Activated T-helper 1 cell treated with anti-CD3 and anti-CD28 coated beads, Interleukin-12 subunit alpha, Interleukin-12 subunit beta, Interleukin-2, Interleukin-4 antibody, amounts not matched to agents 30 ng/mL and 10 ng/mL and 1 ng/mL, durations not matched to agents 14 hours and 24 hours and 36 hours (primary cell): ENCODE measurements at regions of chr2 and their contacts with region 1.

Region 1: GRCh38 chr2:130727286-130728018 is 1.4 kb upstream of the GPR148 start:
- DNase-seq: peak; percentile 84
- H3K4me3 Mint-ChIP-seq: peak overlapping the region; percentile 76
- H3K27ac Mint-ChIP-seq: peak overlapping the region; percentile 57
- H3K4me1 Mint-ChIP-seq: peaks cover 12% of the 10 kb centered on the region
- H3K27me3 Mint-ChIP-seq: peaks cover 12% of the 10 kb centered on the region

Region 2: DNA sequence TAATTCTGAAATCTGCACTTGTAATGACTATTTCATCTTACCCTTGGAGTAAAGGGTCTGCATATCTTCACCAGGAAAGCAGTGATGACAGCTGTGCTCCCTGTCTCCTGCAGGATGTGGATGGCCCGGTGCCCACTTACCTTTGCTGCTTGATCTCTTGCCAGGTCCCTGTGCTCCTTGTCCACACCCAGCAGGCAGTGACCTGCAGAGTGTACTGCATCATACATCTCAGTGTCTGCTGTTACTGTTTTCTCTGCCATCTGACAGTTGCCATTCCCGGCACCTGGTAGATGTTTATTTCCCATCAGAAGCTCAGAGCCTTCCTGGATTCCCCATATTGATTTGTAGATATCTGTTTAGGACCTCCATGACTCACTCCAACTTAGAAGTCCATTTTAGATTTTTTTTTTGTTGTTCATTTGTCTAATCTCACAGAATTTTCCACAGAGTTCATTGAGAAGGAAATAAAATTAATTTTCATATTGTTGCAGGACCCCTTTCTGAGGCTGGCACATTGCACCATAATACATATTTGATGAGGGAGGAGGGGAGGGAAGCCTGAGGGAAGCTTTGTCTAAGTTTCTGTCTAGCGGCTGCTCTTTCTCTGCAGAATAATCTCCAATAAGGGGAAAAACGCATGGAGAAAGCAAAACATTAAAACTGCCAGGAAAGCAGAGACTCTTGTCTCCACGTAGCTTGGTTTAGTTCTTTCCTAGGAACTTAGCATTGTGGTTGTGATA is 1445.5 kb before region 1 on chr2:
- intact Hi-C with region 1: no loop called
- DNase-seq: no peak
- H3K4me3 Mint-ChIP-seq: no peak overlapping the region
- H3K27ac Mint-ChIP-seq: no peak overlapping the region
- H3K4me1 Mint-ChIP-seq: no peaks in the 10 kb centered on the region
- H3K27me3 Mint-ChIP-seq: no peaks in the 10 kb centered on the region

Region 3: GRCh38 chr2:130785466-130786055 is 58.1 kb after region 1 on chr2:
- intact Hi-C with region 1: no loop called
- DNase-seq: no peak
- H3K4me3 Mint-ChIP-seq: no peak overlapping the region
- H3K27ac Mint-ChIP-seq: no peak overlapping the region
- H3K4me1 Mint-ChIP-seq: no peaks in the 10 kb centered on the region
- H3K27me3 Mint-ChIP-seq: peaks cover 7% of the 10 kb centered on the region

Region 4: GRCh38 chr2:131093006-131093695 is 365.7 kb after region 1 on chr2 and contains the start of gene FAM168B:
- intact Hi-C with region 1: loop called (anchors 5 kb)
- DNase-seq: peak; percentile 89
- H3K4me3 Mint-ChIP-seq: peak within 1 kb of the TSS; percentile 93
- H3K27ac Mint-ChIP-seq: peak within 1 kb of the TSS; percentile 95
- H3K4me1 Mint-ChIP-seq: peaks cover 18% of the 10 kb centered on the region
- H3K27me3 Mint-ChIP-seq: no peaks in the 10 kb centered on the region
- total RNA-seq, gene FAM168B: 79.0 and 79.1 TPM in 2 replicates